GM12878 (cell line): ENCODE measurements at regions of chr15 and their contacts with region 1.

Region 1: GRCh38 chr15:55168329-55168974 is 28.3 kb downstream of the RSL24D1 start:
- DNase-seq: peak; percentile 8
- ATAC-seq: peak; percentile 99
- H3K4me3 ChIP-seq: no peak overlapping the region
- H3K27ac ChIP-seq: no peak overlapping the region
- H3K4me1 ChIP-seq: no peaks in the 10 kb centered on the region
- H3K27me3 ChIP-seq: no peaks in the 10 kb centered on the region
- CTCF ChIP-seq: peak; percentile 79 to 94 (median 86)
- EP300 ChIP-seq: no peak
- POLR2A ChIP-seq: no peak
- RAD21 ChIP-seq: peak; percentile 75

Region 2: GRCh38 chr15:53808058-53808706 is 1360.3 kb before region 1 on chr15:
- CTCF ChIA-PET with region 1: interaction called, 26 read pairs
- POLR2A ChIA-PET with region 1: no interaction called
- RAD21 ChIA-PET with region 1: interaction called, 7 read pairs
- SMC1A ChIA-PET with region 1: interaction called, 4 read pairs
- in situ Hi-C with region 1: no loop called
- intact Hi-C with region 1: loop called (anchors 2 kb)
- DNase-seq: no peak
- ATAC-seq: peak; percentile 73
- H3K4me3 ChIP-seq: no peak overlapping the region
- H3K27ac ChIP-seq: no peak overlapping the region
- H3K4me1 ChIP-seq: no peaks in the 10 kb centered on the region
- H3K27me3 ChIP-seq: no peaks in the 10 kb centered on the region
- CTCF ChIP-seq: peak; percentile 47 to 54 (median 52)
- EP300 ChIP-seq: no peak
- POLR2A ChIP-seq: no peak
- RAD21 ChIP-seq: peak; percentile 19; the same call in 1 of the 2 replicates

Region 3: DNA sequence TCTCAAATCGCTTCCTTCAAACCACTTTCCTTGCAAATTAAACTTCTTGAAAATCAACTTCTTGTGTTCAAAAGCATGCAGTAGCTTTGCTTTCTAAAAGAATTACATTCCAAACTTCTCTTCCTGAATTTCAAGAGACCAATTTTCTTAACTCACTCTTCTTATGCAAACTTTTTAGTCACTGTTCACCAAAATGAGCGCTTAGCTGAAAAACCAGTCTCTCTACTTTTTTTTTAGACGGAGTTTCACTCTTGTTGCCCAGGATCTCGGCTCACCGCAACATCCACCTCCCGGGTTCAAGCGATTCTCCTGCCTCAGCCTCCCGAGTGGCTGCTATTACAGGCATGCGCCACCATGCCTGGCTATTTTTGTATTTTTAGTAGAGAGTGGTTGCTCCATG is 1269.1 kb before region 1 on chr15:
- CTCF ChIA-PET with region 1: interaction called, 50 read pairs
- POLR2A ChIA-PET with region 1: no interaction called
- RAD21 ChIA-PET with region 1: no interaction called
- SMC1A ChIA-PET with region 1: interaction called, 3 read pairs
- in situ Hi-C with region 1: no loop called
- intact Hi-C with region 1: loop called (anchors 5 kb)
- DNase-seq: no peak
- ATAC-seq: no peak
- H3K4me3 ChIP-seq: no peak overlapping the region
- H3K27ac ChIP-seq: no peak overlapping the region
- H3K4me1 ChIP-seq: no peaks in the 10 kb centered on the region
- H3K27me3 ChIP-seq: no peaks in the 10 kb centered on the region
- CTCF ChIP-seq: no peak
- EP300 ChIP-seq: no peak
- POLR2A ChIP-seq: no peak
- RAD21 ChIP-seq: no peak

Region 4: DNA sequence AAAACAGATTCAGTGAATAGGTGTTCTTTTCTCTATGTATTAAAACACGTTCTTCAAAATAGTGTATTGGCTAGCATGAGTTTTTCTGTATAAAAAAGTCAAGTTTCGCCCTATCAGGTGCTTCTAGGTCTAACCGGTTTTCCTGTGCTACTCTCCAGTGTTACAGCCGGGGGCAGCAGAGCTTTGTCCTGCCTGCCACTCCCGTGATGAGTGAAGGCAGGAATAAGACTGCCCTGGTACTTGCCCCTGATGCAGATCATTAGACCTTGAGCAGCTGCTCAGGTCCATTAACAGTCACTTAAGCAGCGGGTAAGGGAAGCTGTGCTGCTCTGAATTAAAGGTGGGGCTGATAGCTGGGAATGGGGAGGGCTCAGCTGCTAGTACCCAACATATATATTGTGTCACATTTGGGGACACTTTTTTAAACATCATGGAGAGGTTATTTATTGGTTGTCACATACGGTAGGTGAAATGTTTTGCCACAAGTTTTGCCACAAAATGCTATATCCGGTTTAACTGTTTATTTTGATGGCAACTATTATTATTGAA is 1191.5 kb before region 1 on chr15:
- CTCF ChIA-PET with region 1: interaction called, 52 read pairs
- POLR2A ChIA-PET with region 1: no interaction called
- RAD21 ChIA-PET with region 1: interaction called, 19 read pairs
- SMC1A ChIA-PET with region 1: interaction called, 33 read pairs
- in situ Hi-C with region 1: no loop called
- intact Hi-C with region 1: no loop called
- DNase-seq: no peak
- ATAC-seq: peak; percentile 72
- H3K4me3 ChIP-seq: no peak overlapping the region
- H3K27ac ChIP-seq: no peak overlapping the region
- H3K4me1 ChIP-seq: no peaks in the 10 kb centered on the region
- H3K27me3 ChIP-seq: no peaks in the 10 kb centered on the region
- CTCF ChIP-seq: peak in 2 of 3 experiments; percentile 34 to 62; a peak in 2 of 6 replicates
- EP300 ChIP-seq: no peak
- POLR2A ChIP-seq: no peak
- RAD21 ChIP-seq: peak; percentile 24; the same call in 1 of the 2 replicates

Region 5: GRCh38 chr15:55151631-55152030 is 16.8 kb before region 1 on chr15:
- CTCF ChIA-PET with region 1: interaction called, 11 read pairs
- POLR2A ChIA-PET with region 1: no interaction called
- RAD21 ChIA-PET with region 1: interaction called, 3 read pairs
- SMC1A ChIA-PET with region 1: interaction called, 6 read pairs
- in situ Hi-C with region 1: no loop called
- intact Hi-C with region 1: no loop called
- DNase-seq: no peak
- ATAC-seq: no peak
- H3K4me3 ChIP-seq: no peak overlapping the region
- H3K27ac ChIP-seq: no peak overlapping the region
- H3K4me1 ChIP-seq: no peaks in the 10 kb centered on the region
- H3K27me3 ChIP-seq: no peaks in the 10 kb centered on the region
- CTCF ChIP-seq: no peak
- EP300 ChIP-seq: no peak
- POLR2A ChIP-seq: no peak
- RAD21 ChIP-seq: no peak